Activated CD8-positive, alpha-beta T cell treated with anti-CD3 and anti-CD28 coated beads for 36 hours (primary cell): ENCODE measurements at regions of chr2 and their contacts with region 1.

Region 1: GRCh38 chr2:232838406-232838874 is 31.6 kb upstream of the SNORC start:
- DNase-seq: peak; percentile 82
- ATAC-seq: peak; percentile 96
- H3K4me3 Mint-ChIP-seq: no peak overlapping the region
- H3K27ac Mint-ChIP-seq: peak overlapping the region; percentile 83
- H3K4me1 Mint-ChIP-seq: peaks cover 31% of the 10 kb centered on the region
- H3K27me3 Mint-ChIP-seq: no peaks in the 10 kb centered on the region
- CTCF ChIP-seq: no peak

Region 2: DNA sequence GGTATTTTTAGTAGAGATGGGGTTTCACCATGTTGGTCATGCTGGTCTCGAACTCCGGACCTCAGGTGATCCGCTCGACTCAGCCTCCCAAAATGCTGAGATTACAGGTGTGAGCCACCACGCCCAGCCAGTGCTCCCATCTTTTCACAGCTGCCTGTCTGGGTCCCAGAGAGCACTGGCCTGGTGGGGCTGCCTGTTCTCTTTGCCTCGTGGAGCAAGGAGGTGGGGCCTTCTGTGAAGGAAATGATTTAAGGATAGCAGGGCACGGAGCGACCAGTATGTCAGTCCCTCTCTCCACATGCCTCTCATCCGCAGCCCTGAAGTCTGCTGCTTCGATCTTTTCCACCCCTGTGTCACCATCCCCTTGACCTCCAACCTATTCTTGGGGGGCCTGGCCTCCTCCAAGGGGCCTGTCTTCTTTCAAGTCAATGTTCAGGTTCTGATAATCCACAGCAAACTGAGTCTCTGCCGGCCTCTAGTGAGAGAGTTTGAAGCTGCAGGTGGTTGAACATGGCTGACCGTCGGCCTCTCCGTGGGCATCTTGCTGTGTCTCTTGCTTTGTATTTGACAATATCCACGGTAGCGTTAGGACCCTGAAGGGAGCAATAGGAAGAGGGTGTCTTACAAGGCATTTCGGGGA is 169.5 kb before region 1 on chr2:
- CTCF ChIA-PET with region 1: no interaction called
- POLR2A ChIA-PET with region 1: no interaction called
- intact Hi-C with region 1: no loop called
- DNase-seq: peak; percentile 12
- ATAC-seq: peak; percentile 42
- H3K4me3 Mint-ChIP-seq: no peak overlapping the region
- H3K27ac Mint-ChIP-seq: no peak overlapping the region
- H3K4me1 Mint-ChIP-seq: no peaks in the 10 kb centered on the region
- H3K27me3 Mint-ChIP-seq: peaks cover 6% of the 10 kb centered on the region
- CTCF ChIP-seq: no peak

Region 3: GRCh38 chr2:232816657-232817056 is 21.8 kb before region 1 on chr2:
- CTCF ChIA-PET with region 1: no interaction called
- POLR2A ChIA-PET with region 1: no interaction called
- intact Hi-C with region 1: no loop called
- DNase-seq: no peak
- ATAC-seq: no peak
- H3K4me3 Mint-ChIP-seq: no peak overlapping the region
- H3K27ac Mint-ChIP-seq: peak overlapping the region; percentile 43
- H3K4me1 Mint-ChIP-seq: no peaks in the 10 kb centered on the region
- H3K27me3 Mint-ChIP-seq: no peaks in the 10 kb centered on the region
- CTCF ChIP-seq: no peak

Region 4: GRCh38 chr2:232854082-232854481 is 15.6 kb after region 1 on chr2:
- CTCF ChIA-PET with region 1: interaction called, 12 read pairs
- POLR2A ChIA-PET with region 1: no interaction called
- intact Hi-C with region 1: no loop called
- DNase-seq: no peak
- ATAC-seq: no peak
- H3K4me3 Mint-ChIP-seq: no peak overlapping the region
- H3K27ac Mint-ChIP-seq: no peak overlapping the region
- H3K4me1 Mint-ChIP-seq: peaks cover 5% of the 10 kb centered on the region
- H3K27me3 Mint-ChIP-seq: no peaks in the 10 kb centered on the region
- CTCF ChIP-seq: no peak